CD8-positive, alpha-beta T cell (primary cell): ENCODE measurements at regions of chr20 and their contacts with region 1.

Region 1: GRCh38 chr20:40821429-40821828 is 132.4 kb upstream of the MAFB start:
- DNase-seq: no peak
- ATAC-seq: no peak
- H3K4me3 ChIP-seq: no peak overlapping the region
- H3K4me3 Mint-ChIP-seq: no peak overlapping the region
- H3K27ac ChIP-seq: no peak overlapping the region
- H3K27ac Mint-ChIP-seq: no peak overlapping the region
- H3K4me1 ChIP-seq: no peaks in the 10 kb centered on the region
- H3K4me1 Mint-ChIP-seq: no peaks in the 10 kb centered on the region
- H3K27me3 ChIP-seq: no peaks in the 10 kb centered on the region
- H3K27me3 Mint-ChIP-seq: peaks cover 8% of the 10 kb centered on the region
- CTCF ChIP-seq: no peak

Region 2: GRCh38 chr20:40763646-40764295 is 57.7 kb before region 1 on chr20:
- CTCF ChIA-PET with region 1: no interaction called
- POLR2A ChIA-PET with region 1: no interaction called
- intact Hi-C with region 1: loop called in 1 of 2 experiments (anchors 2 kb)
- DNase-seq: no peak
- ATAC-seq: no peak
- H3K4me3 ChIP-seq: no peak overlapping the region
- H3K4me3 Mint-ChIP-seq: no peak overlapping the region
- H3K27ac ChIP-seq: no peak overlapping the region
- H3K27ac Mint-ChIP-seq: no peak overlapping the region
- H3K4me1 ChIP-seq: no peaks in the 10 kb centered on the region
- H3K4me1 Mint-ChIP-seq: no peaks in the 10 kb centered on the region
- H3K27me3 ChIP-seq: no peaks in the 10 kb centered on the region
- H3K27me3 Mint-ChIP-seq: peaks cover 6% of the 10 kb centered on the region
- CTCF ChIP-seq: no peak

Region 3: GRCh38 chr20:40781327-40782042 is 39.9 kb before region 1 on chr20:
- CTCF ChIA-PET with region 1: no interaction called
- POLR2A ChIA-PET with region 1: no interaction called
- intact Hi-C with region 1: no loop called
- DNase-seq: no peak
- ATAC-seq: no peak
- H3K4me3 ChIP-seq: no peak overlapping the region
- H3K4me3 Mint-ChIP-seq: no peak overlapping the region
- H3K27ac ChIP-seq: no peak overlapping the region
- H3K27ac Mint-ChIP-seq: no peak overlapping the region
- H3K4me1 ChIP-seq: no peaks in the 10 kb centered on the region
- H3K4me1 Mint-ChIP-seq: no peaks in the 10 kb centered on the region
- H3K27me3 ChIP-seq: no peaks in the 10 kb centered on the region
- H3K27me3 Mint-ChIP-seq: peaks cover 2% of the 10 kb centered on the region
- CTCF ChIP-seq: no peak

Region 4: DNA sequence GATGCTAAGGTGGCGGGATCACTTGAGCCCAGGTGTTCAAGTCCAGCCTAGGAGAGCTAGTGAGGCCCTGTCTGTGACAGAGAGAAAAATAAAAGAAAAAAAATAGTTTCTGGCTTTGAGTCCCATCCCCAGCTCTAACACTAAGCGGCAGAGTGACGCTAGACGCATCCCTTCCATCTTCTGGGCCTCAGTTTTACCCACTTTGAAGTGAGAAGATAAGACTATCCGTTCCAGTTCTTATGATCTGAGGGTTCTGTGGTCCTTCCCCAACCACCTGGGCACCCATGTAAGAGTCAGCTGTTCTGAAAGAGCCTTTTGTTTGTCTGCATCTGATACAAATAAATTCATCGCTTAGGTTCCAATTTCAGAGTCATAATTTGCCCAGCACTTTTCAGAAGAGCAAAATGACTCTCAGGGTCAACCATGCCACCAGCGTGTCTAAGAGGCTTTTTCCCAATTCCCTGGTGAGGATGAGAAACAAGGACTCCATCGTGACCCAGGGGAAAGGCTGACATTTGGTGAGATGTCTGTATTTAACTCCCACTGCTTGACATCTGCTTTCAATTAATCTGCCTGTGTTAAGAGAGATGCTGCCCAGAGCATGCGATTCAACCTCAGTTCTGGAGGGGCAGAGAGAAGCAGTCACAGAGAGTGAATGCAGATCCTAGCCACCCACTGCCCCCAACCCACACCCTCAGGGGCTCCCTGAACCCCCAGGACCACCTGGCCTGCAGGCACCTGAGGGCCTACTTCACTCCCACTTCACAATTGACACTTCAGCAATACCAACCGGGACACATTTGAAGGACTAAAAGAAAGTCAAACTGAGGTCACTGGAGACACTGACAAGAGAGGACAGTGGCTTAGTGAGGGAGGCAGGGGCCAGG is 75.6 kb after region 1 on chr20:
- CTCF ChIA-PET with region 1: no interaction called
- POLR2A ChIA-PET with region 1: no interaction called
- intact Hi-C with region 1: loop called in 1 of 2 experiments (anchors 10 kb)
- DNase-seq: no peak
- ATAC-seq: no peak
- H3K4me3 ChIP-seq: no peak overlapping the region
- H3K4me3 Mint-ChIP-seq: no peak overlapping the region
- H3K27ac ChIP-seq: no peak overlapping the region
- H3K27ac Mint-ChIP-seq: no peak overlapping the region
- H3K4me1 ChIP-seq: no peaks in the 10 kb centered on the region
- H3K4me1 Mint-ChIP-seq: no peaks in the 10 kb centered on the region
- H3K27me3 ChIP-seq: no peaks in the 10 kb centered on the region
- H3K27me3 Mint-ChIP-seq: peaks cover 3% of the 10 kb centered on the region
- CTCF ChIP-seq: no peak